ENCODE measurements at regions of chr10 and their contacts with region 1.

Region 1: GRCh38 chr10:30454744-30455510 is 20.9 kb downstream of the MAP3K8 start:
- DNase-seq: no peak
- ATAC-seq: peak; percentile 92
- H3K4me3 ChIP-seq: no peak overlapping the region
- H3K27ac ChIP-seq: peak overlapping the region; percentile 64 to 99
- H3K4me1 ChIP-seq: peaks cover 0 to 3% of the 10 kb centered on the region in 2 donors
- H3K27me3 ChIP-seq: no peaks in the 10 kb centered on the region

Region 2: DNA sequence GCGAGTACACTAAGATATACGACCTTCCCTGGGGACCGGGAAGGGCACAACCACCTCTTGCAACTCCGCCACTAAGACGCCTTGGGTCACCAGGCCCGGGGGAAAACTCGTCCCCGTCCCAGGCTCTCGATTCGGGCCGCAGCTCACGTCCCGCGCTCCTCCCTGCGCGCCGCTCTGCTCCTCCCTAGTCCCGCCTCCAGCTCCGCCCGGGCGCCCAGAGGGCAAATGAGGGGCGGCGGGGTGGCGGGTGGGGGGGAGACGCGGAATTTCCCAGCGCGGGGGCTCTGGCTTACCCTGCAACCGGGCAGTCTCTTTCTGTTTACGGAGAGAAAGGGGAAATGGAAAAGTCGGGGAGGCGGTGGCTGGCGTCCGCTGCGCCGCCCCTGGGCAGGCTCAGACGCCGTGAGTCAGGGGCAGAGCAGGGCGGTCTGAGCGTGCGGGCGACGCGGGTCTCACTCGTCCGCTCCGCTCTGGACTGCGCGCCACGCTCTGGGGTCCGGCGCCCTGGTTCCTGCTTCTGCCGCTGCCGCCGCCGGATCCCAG is 21.1 kb before region 1 on chr10 and contains the start of gene MAP3K8:
- intact Hi-C with region 1: loop called in 1 of 2 experiments (anchors 1 kb)
- DNase-seq: peak; percentile 97 to 98
- ATAC-seq: peak; percentile 94
- H3K4me3 ChIP-seq: peak within 1 kb of the TSS; percentile 86 to 92
- H3K27ac ChIP-seq: peak within 1 kb of the TSS; percentile 99 to 100
- H3K4me1 ChIP-seq: no peaks in the 10 kb centered on the region
- H3K27me3 ChIP-seq: no peaks in the 10 kb centered on the region
- total RNA-seq, gene MAP3K8: 80.3 to 85.4 TPM